IMR-90 (cell line): ENCODE measurements at regions of chrX and their contacts with region 1.

Region 1: DNA sequence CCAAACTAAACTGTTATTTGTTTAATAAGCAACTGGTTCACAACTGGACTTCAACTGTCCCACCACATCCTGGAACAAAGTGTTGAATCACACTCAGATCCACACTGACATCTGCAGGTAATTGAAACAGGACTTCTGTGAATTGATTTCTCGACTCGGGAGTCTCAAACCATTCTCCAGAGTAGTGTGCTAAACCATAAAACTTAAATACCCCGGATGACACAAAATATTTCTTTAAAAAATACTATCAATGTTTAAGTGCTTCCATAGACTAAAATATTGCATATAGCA is 95.4 kb upstream of the PLAC1 start:
- DNase-seq: peak; percentile 65
- ATAC-seq: no peak; the same call in 1 of the 2 replicates
- H3K4me3 ChIP-seq: no peak overlapping the region
- H3K27ac ChIP-seq: no peak overlapping the region
- H3K4me1 ChIP-seq: peaks cover 4% of the 10 kb centered on the region
- H3K27me3 ChIP-seq: no peaks in the 10 kb centered on the region
- CTCF ChIP-seq: peak; percentile 37
- POLR2A ChIP-seq: no peak
- RAD21 ChIP-seq: peak; percentile 64

Region 2: GRCh38 chrX:134520860-134521390 is 232.7 kb before region 1 on chrX:
- CTCF ChIA-PET with region 1: interaction called, 10 read pairs
- POLR2A ChIA-PET with region 1: no interaction called
- dilution Hi-C with region 1: no loop called
- in situ Hi-C with region 1: loop called (anchors 10 kb)
- intact Hi-C with region 1: loop called (anchors 1 kb)
- DNase-seq: peak; percentile 76
- ATAC-seq: peak; percentile 90
- H3K4me3 ChIP-seq: no peak overlapping the region
- H3K27ac ChIP-seq: 0 out of 2 replicates have a peak overlapping the region, but pooled peaks have one; percentile 4
- H3K4me1 ChIP-seq: peaks cover 4% of the 10 kb centered on the region; the same call in 1 of the 2 replicates
- H3K27me3 ChIP-seq: no peaks in the 10 kb centered on the region
- CTCF ChIP-seq: peak; percentile 64
- POLR2A ChIP-seq: no peak
- RAD21 ChIP-seq: peak; percentile 76

Region 3: GRCh38 chrX:134603806-134604700 is 149.6 kb before region 1 on chrX:
- CTCF ChIA-PET with region 1: interaction called, 3 read pairs
- POLR2A ChIA-PET with region 1: no interaction called
- dilution Hi-C with region 1: no loop called
- in situ Hi-C with region 1: no loop called
- intact Hi-C with region 1: loop called (anchors 5 kb)
- DNase-seq: peak; percentile 90
- ATAC-seq: peak; percentile 65
- H3K4me3 ChIP-seq: no peak overlapping the region
- H3K27ac ChIP-seq: peak overlapping the region; percentile 99
- H3K4me1 ChIP-seq: peaks cover 15% of the 10 kb centered on the region
- H3K27me3 ChIP-seq: no peaks in the 10 kb centered on the region
- CTCF ChIP-seq: 0 out of 2 replicates have a peak, but pooled peaks have one; percentile 24
- POLR2A ChIP-seq: no peak
- RAD21 ChIP-seq: peak; percentile 32; the same call in 1 of the 2 replicates